ENCODE measurements at regions of chr7 and their contacts with region 1.

Region 1: DNA sequence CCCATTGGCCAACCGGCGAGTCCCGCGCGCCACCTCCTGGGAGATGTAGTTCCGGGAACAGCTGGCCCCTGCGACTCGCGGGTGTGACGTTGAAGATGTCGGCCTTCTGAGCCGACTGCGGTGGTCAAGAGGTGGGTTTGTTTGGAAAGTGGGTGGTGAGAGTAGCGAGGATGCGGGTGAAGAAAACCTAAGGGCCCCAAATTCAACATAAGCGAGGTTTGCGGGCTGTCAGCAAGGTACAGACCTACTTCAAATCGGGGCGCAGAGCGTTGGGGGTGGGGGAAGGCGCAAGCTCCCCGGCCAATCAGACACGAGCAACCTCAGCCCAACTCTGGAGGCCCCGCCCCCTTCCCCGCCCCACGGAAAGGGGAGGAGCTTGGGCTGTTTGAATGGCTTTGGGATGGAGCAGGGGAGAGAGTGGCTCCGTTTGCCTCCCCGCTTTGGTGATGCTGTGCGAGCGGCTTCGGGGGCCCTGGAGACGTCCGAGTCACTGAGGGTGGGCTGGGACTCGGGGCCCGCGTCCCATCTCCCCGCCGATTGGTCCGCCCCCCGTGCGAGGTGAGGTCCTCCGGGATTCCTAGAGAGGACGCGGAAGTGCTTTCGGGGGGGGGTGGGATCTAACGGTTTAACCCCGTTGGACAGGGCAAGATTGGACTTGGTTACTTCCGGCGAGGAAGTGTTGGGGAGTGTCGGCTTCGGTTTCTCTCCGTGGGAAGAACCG is at the start of gene ZKSCAN5:
- DNase-seq: peak; percentile 98
- H3K4me3 ChIP-seq: peak within 1 kb of the TSS; percentile 59 to 76 (median 75)
- H3K27ac ChIP-seq: peak within 1 kb of the TSS; percentile 69
- H3K4me1 ChIP-seq: peaks cover 20% of the 10 kb centered on the region
- H3K27me3 ChIP-seq: no peaks in the 10 kb centered on the region
- CTCF ChIP-seq: no peak
- POLR2A ChIP-seq: no peak
- total RNA-seq, gene ZKSCAN5: 9.6 and 9.7 TPM in 2 replicates

Region 2: GRCh38 chr7:99340659-99341058 is 164.1 kb before region 1 on chr7:
- CTCF ChIA-PET with region 1: no interaction called
- POLR2A ChIA-PET with region 1: no interaction called
- dilution Hi-C with region 1: no loop called
- intact Hi-C with region 1: no loop called
- DNase-seq: no peak
- H3K4me3 ChIP-seq: no peak overlapping the region
- H3K27ac ChIP-seq: no peak overlapping the region
- H3K4me1 ChIP-seq: no peaks in the 10 kb centered on the region
- H3K27me3 ChIP-seq: no peaks in the 10 kb centered on the region
- CTCF ChIP-seq: no peak
- POLR2A ChIP-seq: no peak

Region 3: GRCh38 chr7:99408379-99409191 is 96.2 kb before region 1 on chr7 and contains the starts of genes BUD31 and PDAP1:
- CTCF ChIA-PET with region 1: no interaction called
- POLR2A ChIA-PET with region 1: no interaction called
- dilution Hi-C with region 1: no loop called
- intact Hi-C with region 1: loop called (anchors 1 kb)
- DNase-seq: peak; percentile 98
- H3K4me3 ChIP-seq: peak within 1 kb of the TSS; percentile 65 to 99 (median 96)
- H3K27ac ChIP-seq: peak within 1 kb of the TSS; percentile 79
- H3K4me1 ChIP-seq: peaks cover 21% of the 10 kb centered on the region
- H3K27me3 ChIP-seq: no peaks in the 10 kb centered on the region
- CTCF ChIP-seq: no peak
- POLR2A ChIP-seq: peak; percentile 91
- total RNA-seq, gene BUD31: 113 and 122 TPM in 2 replicates
- total RNA-seq, gene PDAP1: 148 and 150 TPM in 2 replicates

Region 4: DNA sequence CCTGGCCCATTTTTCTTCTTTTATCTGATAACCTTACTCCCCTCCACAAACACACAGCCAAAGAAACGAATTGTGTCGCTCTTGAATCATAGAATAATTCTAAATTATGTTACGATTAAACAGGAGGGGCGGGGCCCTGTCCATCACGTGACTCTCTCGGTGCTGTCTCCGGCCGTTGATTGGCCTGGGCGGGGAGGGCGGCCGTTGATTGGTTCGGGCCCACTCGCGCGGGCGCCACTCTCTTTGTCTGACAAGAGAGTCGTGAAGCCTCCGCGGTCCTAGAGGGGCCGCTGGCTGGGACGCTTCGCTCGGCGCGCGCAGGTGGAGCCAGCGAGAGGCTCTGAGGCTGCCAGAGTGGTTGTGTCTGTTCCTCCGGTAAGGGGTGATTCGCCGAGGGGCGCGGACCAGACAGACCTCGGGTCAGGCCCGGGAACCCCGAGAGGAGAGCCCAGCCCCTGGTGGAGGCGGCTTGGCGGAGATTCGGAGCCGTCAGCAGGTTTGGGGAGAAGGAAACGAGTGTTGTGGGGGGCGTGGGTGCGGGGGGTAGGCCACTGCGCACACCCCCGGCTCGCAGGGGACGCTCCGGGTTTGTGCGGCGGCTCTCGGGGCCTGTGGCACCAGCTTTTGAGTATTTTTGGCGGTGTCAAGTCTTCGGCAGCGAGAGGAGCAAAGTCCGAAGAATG is 32.1 kb before region 1 on chr7 and contains the start of gene ZNF789:
- CTCF ChIA-PET with region 1: interaction called, 4 read pairs
- POLR2A ChIA-PET with region 1: interaction called, 8 read pairs
- dilution Hi-C with region 1: no loop called
- intact Hi-C with region 1: loop called (anchors 1 kb)
- DNase-seq: peak; percentile 96
- H3K4me3 ChIP-seq: peak within 1 kb of the TSS; percentile 79 to 93 (median 87)
- H3K27ac ChIP-seq: peak within 1 kb of the TSS; percentile 80
- H3K4me1 ChIP-seq: peaks cover 5% of the 10 kb centered on the region
- H3K27me3 ChIP-seq: no peaks in the 10 kb centered on the region
- CTCF ChIP-seq: no peak
- POLR2A ChIP-seq: no peak
- total RNA-seq, gene ZNF789: 16.6 and 21.6 TPM in 2 replicates

Region 5: DNA sequence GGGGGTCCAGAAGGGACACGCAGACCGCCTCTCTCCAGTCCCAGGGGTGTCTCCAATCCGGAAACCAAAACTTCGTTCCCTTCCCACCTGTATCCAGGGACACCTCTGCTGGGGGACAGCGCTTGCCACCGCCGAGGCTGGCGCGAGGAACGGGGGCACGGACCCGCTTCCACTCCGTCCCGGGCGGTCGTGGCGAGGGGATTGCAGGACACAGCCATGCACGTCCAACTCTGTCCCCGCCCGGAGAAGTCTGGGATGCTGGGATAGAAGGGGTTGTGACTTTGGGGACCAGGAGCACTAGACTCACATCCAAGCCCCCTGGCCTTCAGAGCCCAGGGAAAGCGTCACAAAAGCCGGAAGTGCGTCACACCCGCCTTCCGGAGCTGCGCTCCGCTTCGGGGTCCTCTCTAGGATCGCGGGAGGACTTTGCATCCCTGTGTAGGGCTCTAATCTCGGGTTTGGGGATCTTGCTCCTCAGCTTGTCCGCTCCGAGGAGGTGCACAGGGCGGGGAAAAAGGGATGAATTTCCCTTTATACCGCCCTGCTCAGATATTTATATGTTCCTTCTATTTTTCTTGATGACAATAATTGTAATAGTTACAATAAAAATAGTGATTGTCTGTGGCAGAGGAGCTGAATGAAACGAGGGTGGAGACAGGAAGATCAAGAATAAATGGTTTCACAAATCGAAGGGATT is 47.2 kb after region 1 on chr7 and contains the start of gene FAM200A:
- CTCF ChIA-PET with region 1: interaction called, 4 read pairs
- POLR2A ChIA-PET with region 1: interaction called, 4 read pairs
- dilution Hi-C with region 1: no loop called
- intact Hi-C with region 1: loop called (anchors 2 kb)
- DNase-seq: peak; percentile 87
- H3K4me3 ChIP-seq: peak within 1 kb of the TSS; percentile 81 to 93 (median 92)
- H3K27ac ChIP-seq: peak within 1 kb of the TSS; percentile 91
- H3K4me1 ChIP-seq: peaks cover 10% of the 10 kb centered on the region
- H3K27me3 ChIP-seq: no peaks in the 10 kb centered on the region
- CTCF ChIP-seq: no peak
- POLR2A ChIP-seq: peak; percentile 93
- total RNA-seq, gene FAM200A: 3.0 and 3.6 TPM in 2 replicates

Region 6: GRCh38 chr7:99616359-99617191 is 111.8 kb after region 1 on chr7 and contains the start of gene ZSCAN25:
- CTCF ChIA-PET with region 1: no interaction called
- POLR2A ChIA-PET with region 1: no interaction called
- dilution Hi-C with region 1: no loop called
- intact Hi-C with region 1: loop called (anchors 1 kb)
- DNase-seq: peak; percentile 94
- H3K4me3 ChIP-seq: peak within 1 kb of the TSS; percentile 67 to 82 (median 75)
- H3K27ac ChIP-seq: peak within 1 kb of the TSS; percentile 38
- H3K4me1 ChIP-seq: peaks cover 9% of the 10 kb centered on the region
- H3K27me3 ChIP-seq: peaks cover 0 to 3% of the 10 kb centered on the region in 2 experiments
- CTCF ChIP-seq: peak; percentile 37 to 61
- POLR2A ChIP-seq: peak; percentile 86
- total RNA-seq, gene ZSCAN25: 11.4 and 13.8 TPM in 2 replicates